Right ventricle myocardium inferior (tissue), 1 donor: ENCODE measurements at regions of chr16 and their contacts with region 1.

Region 1: GRCh38 chr16:77675464-77676324 is 46.6 kb upstream of the NUDT7 start:
- DNase-seq: no peak
- ATAC-seq: peak; percentile 86

Region 2: GRCh38 chr16:77775911-77776909 is 100.5 kb after region 1 on chr16:
- intact Hi-C with region 1: no loop called
- DNase-seq: no peak
- ATAC-seq: no peak

Region 3: DNA sequence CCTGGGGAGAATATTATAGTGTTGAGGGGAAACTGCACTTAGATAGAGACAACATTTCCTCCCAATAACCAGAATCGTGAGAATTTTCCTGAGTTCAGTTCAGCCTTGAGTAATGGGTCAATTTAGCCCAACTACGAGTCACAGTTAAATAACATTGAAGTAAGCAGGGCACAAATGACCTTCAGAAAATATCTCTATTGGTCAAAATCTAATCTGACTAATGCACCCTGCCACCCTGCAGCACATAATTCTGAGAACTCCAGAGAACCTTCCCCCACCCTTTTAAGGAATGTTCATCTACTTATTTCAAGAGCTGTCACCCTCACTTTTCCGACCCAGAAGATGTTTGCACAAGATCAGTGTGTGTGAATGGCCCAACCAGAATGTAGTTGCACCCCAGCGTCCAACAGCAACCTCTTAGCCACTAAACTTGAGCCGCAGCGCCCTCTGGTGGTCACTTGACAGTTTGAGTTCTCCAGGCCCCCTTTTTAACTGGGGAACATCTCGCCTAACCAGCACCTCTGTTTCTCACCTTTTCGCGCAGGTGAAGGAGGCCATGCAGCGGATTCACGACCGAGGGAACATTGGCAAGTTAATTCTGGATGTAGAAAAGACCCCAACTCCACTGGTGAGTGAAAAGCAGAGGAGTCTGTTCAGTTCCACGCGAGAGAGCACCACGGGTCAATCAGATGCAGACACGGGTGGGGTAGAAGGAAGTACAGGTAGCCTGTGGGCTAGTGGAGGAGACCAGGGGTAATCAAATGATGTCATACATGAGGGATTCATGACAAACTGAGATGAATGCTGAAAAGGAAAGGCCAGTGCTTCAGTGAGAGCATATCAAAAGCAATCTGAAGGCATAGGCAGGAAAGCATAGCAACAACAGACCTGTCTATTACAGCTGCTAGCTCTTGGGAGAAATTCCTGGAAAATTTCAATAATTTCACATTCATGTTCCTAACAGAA is 295.9 kb after region 1 on chr16:
- intact Hi-C with region 1: loop called (anchors 1 kb)
- DNase-seq: peak; percentile 90
- ATAC-seq: peak; percentile 86

Region 4: GRCh38 chr16:78002915-78003538 is 327.3 kb after region 1 on chr16:
- intact Hi-C with region 1: loop called (anchors 1 kb)
- DNase-seq: peak; percentile 89
- ATAC-seq: peak; percentile 86

Region 5: GRCh38 chr16:78099372-78100161 is 423.9 kb after region 1 on chr16 and contains the start of gene WWOX:
- intact Hi-C with region 1: loop called (anchors 5 kb)
- DNase-seq: peak; percentile 98
- ATAC-seq: peak; percentile 96
- total RNA-seq, gene WWOX: 13.1 TPM